ENCODE measurements at regions of chr1 and their contacts with region 1.

Region 1: GRCh38 chr1:17617787-17618557 is 78.5 kb downstream of the ARHGEF10L start:
- DNase-seq: peak; percentile 91 to 94
- ATAC-seq: peak; percentile 89
- H3K4me3 ChIP-seq: peak overlapping the region; percentile 21 to 51
- H3K27ac ChIP-seq: peak overlapping the region; percentile 88 to 96
- H3K4me1 ChIP-seq: no peaks in the 10 kb centered on the region
- H3K27me3 ChIP-seq: no peaks in the 10 kb centered on the region

Region 2: GRCh38 chr1:17569200-17570161 is 48.5 kb before region 1 on chr1:
- intact Hi-C with region 1: loop called in 1 of 2 experiments (anchors 1 kb)
- DNase-seq: peak; percentile 92 to 96
- ATAC-seq: peak; percentile 86
- H3K4me3 ChIP-seq: no peak overlapping the region
- H3K27ac ChIP-seq: peak overlapping the region; percentile 97 to 99
- H3K4me1 ChIP-seq: peaks cover 2 to 5% of the 10 kb centered on the region in 2 donors
- H3K27me3 ChIP-seq: no peaks in the 10 kb centered on the region

Region 3: GRCh38 chr1:17630048-17630830 is 12.3 kb after region 1 on chr1:
- intact Hi-C with region 1: loop called in 1 of 2 experiments (anchors 1 kb)
- DNase-seq: peak; percentile 84 to 89
- ATAC-seq: peak; percentile 80
- H3K4me3 ChIP-seq: no peak overlapping the region
- H3K27ac ChIP-seq: peak overlapping the region; percentile 72 to 76
- H3K4me1 ChIP-seq: no peaks in the 10 kb centered on the region
- H3K27me3 ChIP-seq: no peaks in the 10 kb centered on the region

Region 4: GRCh38 chr1:18618546-18619466 is 1000.8 kb after region 1 on chr1:
- intact Hi-C with region 1: no loop called
- DNase-seq: peak in 1 of 2 donors; percentile 3
- ATAC-seq: no peak
- H3K4me3 ChIP-seq: no peak overlapping the region
- H3K27ac ChIP-seq: no peak overlapping the region
- H3K4me1 ChIP-seq: no peaks in the 10 kb centered on the region
- H3K27me3 ChIP-seq: no peaks in the 10 kb centered on the region

Measured in aorta (tissue), 5 donors.